CD14-positive monocyte (primary cell): ENCODE measurements at regions of chr3 and their contacts with region 1.

Region 1: GRCh38 chr3:128680602-128681368 is 30.2 kb upstream of the RPN1 start:
- DNase-seq: peak; percentile 98 to 99 (median 99)
- H3K4me3 ChIP-seq: peak overlapping the region; percentile 57 to 91 (median 90)
- H3K4me3 Mint-ChIP-seq: peak overlapping the region; percentile 81 to 93
- H3K27ac ChIP-seq: peak overlapping the region; percentile 92 to 97
- H3K27ac Mint-ChIP-seq: peak overlapping the region; percentile 96 to 98 (median 97)
- H3K4me1 ChIP-seq: peaks cover 46 to 47% of the 10 kb centered on the region in 2 donors
- H3K4me1 Mint-ChIP-seq: peaks cover 39% of the 10 kb centered on the region
- H3K27me3 ChIP-seq: no peaks in the 10 kb centered on the region
- H3K27me3 Mint-ChIP-seq: peaks cover 0 to 2% (median 0%) of the 10 kb centered on the region in 3 donors
- CTCF ChIP-seq: peak; percentile 97

Region 2: DNA sequence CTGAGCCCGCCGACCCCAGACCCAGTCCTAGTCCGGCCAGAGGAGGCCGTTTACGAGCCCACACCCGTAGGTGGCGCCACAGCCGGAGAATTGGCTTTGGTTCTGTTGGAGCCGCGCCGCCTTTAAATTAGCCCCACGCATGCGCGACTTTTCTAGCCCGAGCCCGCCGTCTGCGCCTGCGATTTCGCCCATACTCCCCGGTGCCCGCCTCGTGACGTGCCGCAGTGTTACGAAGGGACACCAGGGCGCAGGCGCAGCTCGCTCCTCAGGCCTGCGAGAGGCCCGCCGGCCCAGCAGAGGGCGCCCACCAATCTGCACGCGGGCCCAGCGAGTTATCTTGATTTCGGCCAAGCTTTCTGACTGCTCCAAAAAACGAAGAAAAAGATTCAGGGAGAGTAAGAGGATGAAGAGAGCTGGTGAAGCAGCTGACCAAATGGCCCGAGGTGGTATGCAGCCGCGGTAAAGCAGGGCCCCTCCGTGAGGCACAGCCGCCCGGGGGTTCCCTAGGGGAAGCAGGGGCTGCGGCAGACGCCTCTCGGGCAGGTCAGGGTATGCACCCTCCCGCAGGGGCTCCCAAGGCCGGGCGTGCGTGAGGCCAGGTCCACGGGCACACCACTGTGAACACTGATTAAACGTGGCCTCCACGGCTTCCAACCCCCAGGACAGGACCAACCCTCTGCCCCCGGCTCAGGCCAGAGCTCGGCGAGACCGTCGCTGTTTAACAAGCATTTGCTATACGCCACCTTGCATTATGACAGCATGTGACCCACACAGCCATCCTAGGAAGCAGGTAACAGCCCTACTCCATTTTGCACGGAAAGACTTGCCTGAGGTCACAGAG is 63.0 kb before region 1 on chr3:
- intact Hi-C with region 1: loop called in 1 of 2 experiments (anchors 5 kb)
- DNase-seq: peak; percentile 98 to 99 (median 98)
- H3K4me3 ChIP-seq: peak overlapping the region; percentile 71 to 95 (median 74)
- H3K4me3 Mint-ChIP-seq: peak overlapping the region; percentile 90 to 95
- H3K27ac ChIP-seq: peak overlapping the region; percentile 77 to 89
- H3K27ac Mint-ChIP-seq: peak overlapping the region; percentile 92 to 98 (median 94)
- H3K4me1 ChIP-seq: peaks cover 31 to 37% of the 10 kb centered on the region in 2 donors
- H3K4me1 Mint-ChIP-seq: peaks cover 24% of the 10 kb centered on the region
- H3K27me3 ChIP-seq: no peaks in the 10 kb centered on the region
- H3K27me3 Mint-ChIP-seq: peaks cover 0 to 2% (median 0%) of the 10 kb centered on the region in 3 donors
- CTCF ChIP-seq: peak; percentile 97

Region 3: DNA sequence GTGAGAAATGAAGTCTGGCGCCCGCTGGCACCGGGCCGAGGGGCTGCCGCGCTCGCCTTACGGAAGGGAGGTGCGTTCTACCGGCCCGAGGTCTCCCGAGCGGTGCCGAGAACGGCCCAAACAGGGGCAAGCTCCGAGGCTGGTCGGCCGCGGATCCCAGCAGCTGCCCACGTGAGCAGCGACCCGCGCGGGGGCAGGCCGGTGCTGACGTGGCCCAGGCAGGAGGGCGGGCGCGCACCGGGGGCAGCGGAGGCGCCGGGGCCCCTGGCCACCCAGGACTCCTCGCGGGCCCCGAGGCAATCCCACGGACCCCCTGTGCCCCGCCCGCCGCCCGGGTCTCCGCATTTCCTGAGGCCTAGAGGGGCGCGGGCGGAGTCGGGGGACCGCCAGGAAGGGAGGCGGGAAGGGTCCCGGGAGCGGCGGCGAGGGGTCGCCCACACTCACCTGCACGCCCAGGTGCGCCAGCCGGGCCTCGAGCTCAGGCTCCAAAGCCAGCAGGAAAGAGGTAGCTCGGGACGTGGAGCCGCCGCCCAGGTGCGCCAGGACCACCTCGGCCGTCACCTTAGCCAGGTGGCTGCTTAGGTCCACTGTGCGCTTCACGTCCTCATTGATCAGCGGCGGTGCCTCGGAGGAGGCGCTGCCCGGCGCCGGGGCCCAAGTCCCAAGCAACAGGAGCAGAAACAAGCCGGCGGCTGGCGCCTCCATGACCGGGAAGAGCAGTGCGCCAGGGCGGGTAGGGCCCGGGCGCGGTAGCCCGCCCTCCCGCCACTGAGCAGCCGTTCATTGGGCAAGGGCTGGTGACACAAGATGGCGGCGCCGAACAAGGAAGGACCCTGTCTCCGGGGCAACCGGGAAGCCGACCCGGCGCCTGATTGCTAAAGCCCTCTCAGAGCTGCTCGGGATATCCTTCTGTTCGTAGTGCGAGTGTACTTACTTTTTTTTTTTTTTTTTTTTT is 30.4 kb before region 1 on chr3 and contains the start of gene RPN1:
- intact Hi-C with region 1: loop called in 1 of 2 experiments (anchors 2 kb)
- DNase-seq: peak; percentile 96 to 97 (median 96)
- H3K4me3 ChIP-seq: peak within 1 kb of the TSS; percentile 84 to 98 (median 98)
- H3K4me3 Mint-ChIP-seq: peak within 1 kb of the TSS; percentile 84 to 90
- H3K27ac ChIP-seq: peak within 1 kb of the TSS; percentile 94 to 96
- H3K27ac Mint-ChIP-seq: peak within 1 kb of the TSS; percentile 94 to 99 (median 97)
- H3K4me1 ChIP-seq: peaks cover 28 to 49% of the 10 kb centered on the region in 2 donors
- H3K4me1 Mint-ChIP-seq: peaks cover 49% of the 10 kb centered on the region
- H3K27me3 ChIP-seq: no peaks in the 10 kb centered on the region
- H3K27me3 Mint-ChIP-seq: peaks cover 0 to 2% (median 0%) of the 10 kb centered on the region in 3 donors
- CTCF ChIP-seq: no peak
- polyA plus RNA-seq, gene RPN1: 112 to 375 (median 354) TPM

Region 4: DNA sequence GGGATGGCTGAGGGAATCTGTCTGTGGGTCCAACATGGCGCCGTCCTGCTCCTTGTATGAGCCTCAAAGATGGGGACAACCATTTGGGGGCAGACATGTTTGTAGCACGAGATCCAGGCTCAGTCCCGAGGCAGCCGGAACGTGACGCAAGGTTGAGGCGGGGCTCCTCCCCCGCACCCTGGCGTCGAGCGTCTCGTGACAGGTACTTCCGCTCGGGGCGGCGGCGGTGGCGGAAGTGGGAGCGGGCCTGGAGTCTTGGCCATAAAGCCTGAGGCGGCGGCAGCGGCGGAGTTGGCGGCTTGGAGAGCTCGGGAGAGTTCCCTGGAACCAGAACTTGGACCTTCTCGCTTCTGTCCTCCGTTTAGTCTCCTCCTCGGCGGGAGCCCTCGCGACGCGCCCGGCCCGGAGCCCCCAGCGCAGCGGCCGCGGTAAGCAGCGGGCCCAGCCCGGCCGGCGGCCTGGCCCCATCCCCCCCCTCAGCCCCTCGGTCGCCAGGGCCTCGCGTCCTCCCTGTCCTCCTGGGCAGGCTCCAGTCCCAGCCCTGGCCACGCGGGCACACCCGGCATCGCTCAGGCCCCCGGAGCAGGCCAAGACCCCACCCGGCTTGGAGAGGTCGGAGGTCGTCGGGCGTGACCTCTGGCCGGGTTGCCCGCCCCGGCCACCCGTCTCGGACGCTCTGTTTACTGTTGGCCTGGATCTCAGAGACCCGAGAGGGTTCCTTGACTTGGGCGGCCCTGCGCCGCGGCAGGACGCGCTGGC is 45.3 kb after region 1 on chr3 and contains the start of gene RAB7A:
- intact Hi-C with region 1: loop called (anchors 5 to 10 kb)
- DNase-seq: peak; percentile 97 to 99 (median 99)
- H3K4me3 ChIP-seq: peak within 1 kb of the TSS; percentile 79 to 95 (median 95)
- H3K4me3 Mint-ChIP-seq: peak within 1 kb of the TSS; percentile 89 to 98
- H3K27ac ChIP-seq: peak within 1 kb of the TSS; percentile 86 to 99
- H3K27ac Mint-ChIP-seq: peak within 1 kb of the TSS; percentile 91 to 98 (median 96)
- H3K4me1 ChIP-seq: peaks cover 38 to 49% of the 10 kb centered on the region in 2 donors
- H3K4me1 Mint-ChIP-seq: peaks cover 51% of the 10 kb centered on the region
- H3K27me3 ChIP-seq: no peaks in the 10 kb centered on the region
- H3K27me3 Mint-ChIP-seq: peaks cover 3 to 7% (median 3%) of the 10 kb centered on the region in 3 donors
- CTCF ChIP-seq: no peak
- polyA plus RNA-seq, gene RAB7A: 192 to 261 (median 223) TPM

Region 5: GRCh38 chr3:128736601-128737000 is 55.8 kb after region 1 on chr3:
- intact Hi-C with region 1: loop called in 1 of 2 experiments (anchors 10 kb)
- DNase-seq: peak in 1 of 3 donors; percentile 26
- H3K4me3 ChIP-seq: no peak overlapping the region
- H3K4me3 Mint-ChIP-seq: no peak overlapping the region
- H3K27ac ChIP-seq: no peak overlapping the region
- H3K27ac Mint-ChIP-seq: no peak overlapping the region
- H3K4me1 ChIP-seq: peaks cover 0 to 9% of the 10 kb centered on the region in 2 donors
- H3K4me1 Mint-ChIP-seq: peaks cover 48% of the 10 kb centered on the region
- H3K27me3 ChIP-seq: no peaks in the 10 kb centered on the region
- H3K27me3 Mint-ChIP-seq: no peaks in the 10 kb centered on the region
- CTCF ChIP-seq: no peak

Region 6: GRCh38 chr3:128794770-128795649 is 114.2 kb after region 1 on chr3:
- intact Hi-C with region 1: loop called (anchors 10 kb)
- DNase-seq: peak; percentile 57 to 68 (median 57)
- H3K4me3 ChIP-seq: no peak overlapping the region
- H3K4me3 Mint-ChIP-seq: no peak overlapping the region
- H3K27ac ChIP-seq: peak overlapping the region in 1 of 2 donors; percentile 71
- H3K27ac Mint-ChIP-seq: peak overlapping the region; percentile 49 to 83 (median 72)
- H3K4me1 ChIP-seq: peaks cover 8 to 18% of the 10 kb centered on the region in 2 donors
- H3K4me1 Mint-ChIP-seq: peaks cover 38% of the 10 kb centered on the region
- H3K27me3 ChIP-seq: no peaks in the 10 kb centered on the region
- H3K27me3 Mint-ChIP-seq: peaks cover 0 to 1% (median 0%) of the 10 kb centered on the region in 3 donors
- CTCF ChIP-seq: peak; percentile 88